Adrenal gland (tissue), 19 donors: ENCODE measurements at regions of chr22 and their contacts with region 1.

Region 1: GRCh38 chr22:41688365-41689211 is at the start of gene SNU13:
- DNase-seq: peak; percentile 90 to 97 (median 92)
- H3K4me3 ChIP-seq: peak within 1 kb of the TSS; percentile 52 to 87 (median 76)
- H3K27ac ChIP-seq: peak within 1 kb of the TSS; percentile 89 to 99 (median 97)
- H3K4me1 ChIP-seq: peaks cover 16 to 18% of the 10 kb centered on the region in 2 donors
- H3K27me3 ChIP-seq: no peaks in the 10 kb centered on the region
- CTCF ChIP-seq: peak in 3 of 6 experiments; percentile 10 to 27 (median 16)
- POLR2A ChIP-seq: peak in 1 of 2 donors; percentile 81
- total RNA-seq, gene SNU13: 107 to 266 (median 166) TPM

Region 2: GRCh38 chr22:42070517-42071422 is 382.2 kb after region 1 on chr22 and contains the start of gene NAGA:
- intact Hi-C with region 1: loop called in 1 of 2 experiments (anchors 5 kb)
- DNase-seq: peak; percentile 93 to 98 (median 97)
- H3K4me3 ChIP-seq: peak within 1 kb of the TSS in 3 of 4 donors; percentile 27 to 77 (median 66)
- H3K27ac ChIP-seq: peak within 1 kb of the TSS; percentile 58 to 95 (median 83)
- H3K4me1 ChIP-seq: peaks cover 6 to 29% of the 10 kb centered on the region in 2 donors
- H3K27me3 ChIP-seq: no peaks in the 10 kb centered on the region
- CTCF ChIP-seq: no peak
- POLR2A ChIP-seq: peak; percentile 44 to 92
- total RNA-seq, gene NAGA: 17.5 to 54.0 (median 28.3) TPM